Aorta (tissue), 5 donors: ENCODE measurements at regions of chr15 and their contacts with region 1.

Region 1: GRCh38 chr15:74322181-74323076 is 45.0 kb downstream of the CYP11A1 start:
- DNase-seq: peak; percentile 76 to 89
- ATAC-seq: peak; percentile 66
- H3K4me3 ChIP-seq: no peak overlapping the region
- H3K27ac ChIP-seq: no peak overlapping the region
- H3K4me1 ChIP-seq: no peaks in the 10 kb centered on the region
- H3K27me3 ChIP-seq: no peaks in the 10 kb centered on the region

Region 2: DNA sequence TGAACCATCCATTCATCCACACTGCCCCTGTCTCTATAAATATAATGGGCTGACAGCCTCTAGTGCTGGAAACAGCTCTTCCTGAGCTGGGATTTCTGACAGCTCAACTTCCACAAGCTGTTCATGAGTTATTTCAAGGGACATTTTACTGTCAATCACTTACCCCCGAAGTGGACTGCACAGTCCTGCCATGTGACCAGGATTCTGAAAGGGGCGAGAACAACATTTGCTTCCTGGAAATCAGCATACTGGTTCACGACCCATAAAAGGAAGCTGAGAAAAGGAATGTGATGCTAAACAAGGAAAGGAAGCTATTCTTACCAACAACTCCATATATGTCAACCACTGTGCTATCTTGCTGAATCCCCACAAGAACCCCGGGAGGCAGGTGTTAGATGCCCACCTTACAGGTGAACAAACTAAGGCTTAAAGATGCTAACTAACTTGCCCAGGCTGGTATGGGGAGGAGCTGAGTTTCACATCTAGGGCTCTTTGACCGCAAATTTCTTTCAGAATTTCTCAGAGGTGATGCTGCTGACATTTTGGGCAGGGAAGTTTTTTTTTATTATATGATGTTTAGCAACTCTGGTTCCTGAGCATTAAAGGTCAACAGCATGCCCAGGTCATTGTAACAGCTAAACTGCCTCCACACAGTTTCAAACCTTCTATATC is 896.0 kb before region 1 on chr15:
- intact Hi-C with region 1: no loop called
- DNase-seq: no peak
- ATAC-seq: no peak
- H3K4me3 ChIP-seq: peak overlapping the region in 1 of 2 donors; percentile 8
- H3K27ac ChIP-seq: no peak overlapping the region
- H3K4me1 ChIP-seq: peaks cover 0 to 5% of the 10 kb centered on the region in 2 donors
- H3K27me3 ChIP-seq: no peaks in the 10 kb centered on the region

Region 3: DNA sequence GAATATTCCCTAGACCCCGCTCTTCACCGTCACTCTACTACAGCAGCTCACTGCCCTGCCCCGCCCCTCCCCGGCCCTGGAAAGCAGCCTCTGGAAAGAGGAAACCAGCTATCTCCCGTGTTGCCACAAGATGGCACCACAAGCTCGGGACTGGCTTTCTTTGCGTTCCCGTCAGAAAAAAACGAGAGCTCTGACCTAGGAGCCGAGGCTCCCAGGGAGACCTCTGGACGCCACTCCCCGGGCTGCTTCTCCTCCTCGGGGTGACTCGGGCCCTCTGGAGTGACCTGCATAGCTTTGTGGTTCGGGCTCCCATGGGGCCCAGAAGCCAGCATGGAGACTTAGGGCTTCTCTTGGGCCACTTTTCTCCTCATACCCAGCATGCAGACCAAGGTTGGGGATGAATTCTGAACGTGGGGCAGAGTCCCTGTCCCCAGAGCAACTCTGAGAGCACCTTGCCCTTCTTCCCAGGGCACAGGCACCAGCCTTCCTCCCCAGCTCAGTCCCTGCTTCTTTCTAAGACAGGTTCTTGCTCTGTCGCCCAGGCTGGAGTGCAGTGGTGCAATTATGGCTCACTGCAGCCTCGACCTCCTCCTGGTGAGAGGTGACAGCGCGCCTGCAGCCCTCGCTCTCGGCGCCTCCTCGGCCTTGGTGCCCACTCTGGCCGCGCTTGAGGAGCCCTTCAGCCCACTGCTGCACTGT is 349.3 kb before region 1 on chr15:
- intact Hi-C with region 1: loop called in 1 of 2 experiments (anchors 5 kb)
- DNase-seq: peak; percentile 90 to 95
- ATAC-seq: peak; percentile 91
- H3K4me3 ChIP-seq: no peak overlapping the region
- H3K27ac ChIP-seq: no peak overlapping the region
- H3K4me1 ChIP-seq: no peaks in the 10 kb centered on the region
- H3K27me3 ChIP-seq: no peaks in the 10 kb centered on the region

Region 4: GRCh38 chr15:73982222-73982962 is 340.0 kb before region 1 on chr15:
- intact Hi-C with region 1: loop called in 1 of 2 experiments (anchors 5 kb)
- DNase-seq: peak; percentile 94 to 96
- ATAC-seq: peak; percentile 90
- H3K4me3 ChIP-seq: no peak overlapping the region
- H3K27ac ChIP-seq: peak overlapping the region; percentile 59 to 88
- H3K4me1 ChIP-seq: no peaks in the 10 kb centered on the region
- H3K27me3 ChIP-seq: no peaks in the 10 kb centered on the region

Region 5: GRCh38 chr15:73991726-73992593 is 330.5 kb before region 1 on chr15 and contains the start of gene STOML1:
- intact Hi-C with region 1: loop called in 1 of 2 experiments (anchors 5 kb)
- DNase-seq: peak; percentile 96 to 99
- ATAC-seq: peak; percentile 92
- H3K4me3 ChIP-seq: peak within 1 kb of the TSS; percentile 57 to 85
- H3K27ac ChIP-seq: peak within 1 kb of the TSS; percentile 30 to 86
- H3K4me1 ChIP-seq: no peaks in the 10 kb centered on the region
- H3K27me3 ChIP-seq: no peaks in the 10 kb centered on the region
- total RNA-seq, gene STOML1: 12.9 to 16.4 TPM

Region 6: DNA sequence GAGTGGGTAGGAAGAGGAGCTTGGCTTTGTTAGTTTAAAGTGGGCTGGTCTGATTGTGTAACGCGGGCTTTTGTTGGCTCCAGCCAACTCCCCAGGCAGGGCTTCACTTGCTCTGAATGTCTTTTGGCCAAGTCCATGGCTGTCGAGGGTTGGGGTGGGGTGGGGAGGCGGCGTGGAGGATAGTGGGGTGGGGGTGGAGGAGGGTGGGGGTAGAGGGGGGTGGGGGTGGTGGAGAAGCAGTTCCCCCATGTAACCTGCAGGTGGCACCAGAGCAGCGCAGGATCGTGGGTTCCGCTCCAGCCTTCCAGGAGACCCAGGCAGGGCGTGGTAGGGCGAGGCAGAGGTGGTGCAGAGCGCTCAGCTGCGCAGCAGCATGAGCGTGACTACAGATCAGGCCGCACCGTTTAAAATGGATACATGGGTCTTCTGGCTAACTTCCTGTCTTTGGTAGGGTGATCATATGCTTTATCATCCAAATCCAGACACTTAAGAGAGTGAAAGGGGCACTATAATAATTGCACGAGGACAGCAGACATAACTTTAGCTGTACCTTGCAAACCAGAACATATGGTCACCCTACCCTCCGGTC is 268.4 kb before region 1 on chr15:
- intact Hi-C with region 1: loop called (anchors 2 to 5 kb)
- DNase-seq: peak; percentile 87 to 91
- ATAC-seq: peak; percentile 86
- H3K4me3 ChIP-seq: no peak overlapping the region
- H3K27ac ChIP-seq: no peak overlapping the region
- H3K4me1 ChIP-seq: peaks cover 0 to 2% of the 10 kb centered on the region in 2 donors
- H3K27me3 ChIP-seq: no peaks in the 10 kb centered on the region

Region 7: GRCh38 chr15:74127260-74127953 is 195.0 kb before region 1 on chr15:
- intact Hi-C with region 1: loop called (anchors 1 to 5 kb)
- DNase-seq: peak; percentile 92 to 97
- ATAC-seq: peak; percentile 95
- H3K4me3 ChIP-seq: no peak overlapping the region
- H3K27ac ChIP-seq: no peak overlapping the region
- H3K4me1 ChIP-seq: no peaks in the 10 kb centered on the region
- H3K27me3 ChIP-seq: peaks cover 0 to 4% of the 10 kb centered on the region in 2 donors

Region 8: GRCh38 chr15:74240002-74240568 is 82.3 kb before region 1 on chr15:
- intact Hi-C with region 1: loop called in 1 of 2 experiments (anchors 5 kb)
- DNase-seq: peak; percentile 94
- ATAC-seq: peak; percentile 79
- H3K4me3 ChIP-seq: no peak overlapping the region
- H3K27ac ChIP-seq: no peak overlapping the region
- H3K4me1 ChIP-seq: no peaks in the 10 kb centered on the region
- H3K27me3 ChIP-seq: no peaks in the 10 kb centered on the region